HepG2 (cell line): ENCODE measurements at regions of chr3 and their contacts with region 1.

Region 1: DNA sequence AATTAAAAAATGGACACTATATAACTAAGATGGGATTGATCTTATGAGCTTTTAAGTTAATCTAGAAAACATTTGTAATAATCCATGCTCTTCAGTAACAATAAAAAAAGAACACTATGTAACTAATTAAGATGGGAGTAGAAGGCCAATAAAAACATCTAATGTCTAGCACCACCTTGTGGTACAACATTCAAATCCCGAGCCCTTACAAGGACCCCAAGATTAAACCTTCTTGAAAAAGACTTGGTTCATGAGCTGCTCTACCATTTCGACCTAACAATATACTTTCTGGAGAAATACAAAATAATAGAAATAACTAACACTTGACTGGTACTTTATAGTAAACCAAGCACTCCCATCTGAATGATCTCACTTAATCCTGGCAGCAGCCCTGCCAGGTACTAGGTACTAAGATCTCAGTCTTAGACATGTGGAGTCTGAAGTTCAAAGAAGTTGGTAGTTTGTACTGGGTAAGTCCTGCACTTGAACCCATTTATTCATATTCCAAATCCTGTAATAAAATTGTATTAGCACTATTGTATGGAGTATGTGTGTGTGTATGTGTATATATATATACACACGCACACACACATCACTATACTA is 21.8 kb downstream of the METTL6 start:
- DNase-seq: peak; percentile 40
- ATAC-seq: peak; percentile 69
- H3K4me3 ChIP-seq: no peak overlapping the region
- H3K27ac ChIP-seq: no peak overlapping the region
- H3K4me1 ChIP-seq: no peaks in the 10 kb centered on the region
- H3K27me3 ChIP-seq: no peaks in the 10 kb centered on the region
- CTCF ChIP-seq: peak; percentile 44; the same call in 1 of the 2 replicates
- EP300 ChIP-seq: no peak
- POLR2A ChIP-seq: no peak
- RAD21 ChIP-seq: no peak

Region 2: GRCh38 chr3:15108082-15108545 is 297.4 kb before region 1 on chr3:
- CTCF ChIA-PET with region 1: interaction called, 5 read pairs
- POLR2A ChIA-PET with region 1: no interaction called
- in situ Hi-C with region 1: loop called (anchors 10 kb)
- intact Hi-C with region 1: loop called (anchors 5 kb)
- DNase-seq: peak; percentile 64
- ATAC-seq: peak; percentile 94
- H3K4me3 ChIP-seq: peak overlapping the region; percentile 35 to 62 (median 52); a peak in 5 of 6 replicates
- H3K27ac ChIP-seq: peak overlapping the region; percentile 66
- H3K4me1 ChIP-seq: peaks cover 39% of the 10 kb centered on the region
- H3K27me3 ChIP-seq: peaks cover 0 to 2% of the 10 kb centered on the region in 2 experiments; a peak in 1 of 5 replicates
- CTCF ChIP-seq: peak; percentile 95
- EP300 ChIP-seq: no peak
- POLR2A ChIP-seq: no peak
- RAD21 ChIP-seq: peak; percentile 91

Region 3: DNA sequence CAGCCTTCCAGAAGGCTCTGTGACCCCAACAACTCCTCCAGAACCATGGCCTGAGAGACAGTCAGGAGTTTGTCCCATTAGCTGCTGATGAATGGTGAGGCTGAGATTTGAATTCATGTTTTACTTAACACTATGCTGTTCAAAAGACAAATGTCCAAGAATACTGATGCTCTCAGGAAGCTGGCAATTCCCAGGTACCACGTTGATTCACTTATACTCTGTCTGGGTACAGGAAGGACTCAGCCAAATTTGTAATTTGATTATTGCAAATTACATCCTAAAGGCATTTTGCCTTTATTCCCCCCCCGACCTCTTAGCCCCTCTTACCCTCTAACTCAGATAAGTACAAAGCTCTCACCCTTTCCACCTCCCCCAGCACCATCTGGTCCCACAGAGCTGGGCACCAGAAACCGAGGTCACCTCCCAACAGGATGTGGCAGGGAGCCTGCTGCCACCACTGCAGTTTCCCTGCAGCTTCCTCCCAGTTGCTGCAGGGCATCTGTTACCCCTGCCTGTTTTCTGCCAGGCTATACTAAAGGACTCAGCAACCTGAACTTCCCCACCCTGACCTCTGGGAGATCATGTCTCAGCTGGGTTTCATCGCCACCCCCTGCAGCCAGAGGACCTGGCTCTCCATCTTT is 55.5 kb after region 1 on chr3:
- CTCF ChIA-PET with region 1: no interaction called
- POLR2A ChIA-PET with region 1: no interaction called
- in situ Hi-C with region 1: no loop called
- intact Hi-C with region 1: no loop called
- DNase-seq: no peak
- ATAC-seq: peak; percentile 37; the same call in 2 of the 3 replicates
- H3K4me3 ChIP-seq: no peak overlapping the region
- H3K27ac ChIP-seq: no peak overlapping the region
- H3K4me1 ChIP-seq: peaks cover 7% of the 10 kb centered on the region
- H3K27me3 ChIP-seq: no peaks in the 10 kb centered on the region
- CTCF ChIP-seq: no peak
- EP300 ChIP-seq: no peak
- POLR2A ChIP-seq: no peak
- RAD21 ChIP-seq: no peak